ENCODE measurements at regions of chr5 and their contacts with region 1.

Region 1: GRCh38 chr5:156762771-156763170 is 87.3 kb upstream of the PPP1R2B start:
- DNase-seq: no peak
- H3K4me3 ChIP-seq: no peak overlapping the region
- H3K27ac ChIP-seq: no peak overlapping the region
- H3K27me3 ChIP-seq: no peaks in the 10 kb centered on the region
- CTCF ChIP-seq: no peak

Region 2: GRCh38 chr5:156350256-156350655 is 412.5 kb before region 1 on chr5:
- CTCF ChIA-PET with region 1: interaction called, 12 read pairs
- POLR2A ChIA-PET with region 1: no interaction called
- DNase-seq: no peak
- H3K4me3 ChIP-seq: no peak overlapping the region
- H3K27ac ChIP-seq: no peak overlapping the region
- H3K27me3 ChIP-seq: no peaks in the 10 kb centered on the region
- CTCF ChIP-seq: no peak

Region 3: GRCh38 chr5:156411185-156411613 is 351.6 kb before region 1 on chr5:
- CTCF ChIA-PET with region 1: no interaction called
- POLR2A ChIA-PET with region 1: no interaction called
- DNase-seq: peak; percentile 21
- H3K4me3 ChIP-seq: no peak overlapping the region
- H3K27ac ChIP-seq: no peak overlapping the region
- H3K27me3 ChIP-seq: no peaks in the 10 kb centered on the region
- CTCF ChIP-seq: no peak

Region 4: DNA sequence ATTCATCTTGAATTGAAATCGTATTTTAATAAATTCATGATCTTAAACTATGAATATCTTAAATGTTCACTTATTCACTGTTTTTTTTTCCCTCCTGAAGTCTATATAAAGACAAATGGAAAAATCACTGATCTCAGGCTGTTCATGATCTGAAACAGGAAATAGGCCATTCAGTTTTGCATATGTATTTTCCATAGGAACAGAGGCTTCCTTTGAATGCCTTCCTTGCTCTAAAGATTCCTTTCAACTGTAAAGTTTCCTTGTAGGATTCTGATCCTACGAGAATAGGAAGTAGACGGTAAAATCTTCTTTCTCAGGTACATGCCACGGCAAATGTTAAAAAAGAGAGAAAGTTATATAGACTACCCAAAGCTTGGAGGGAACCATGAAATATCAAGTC is 107.0 kb before region 1 on chr5:
- CTCF ChIA-PET with region 1: no interaction called
- POLR2A ChIA-PET with region 1: no interaction called
- DNase-seq: no peak
- H3K4me3 ChIP-seq: no peak overlapping the region
- H3K27ac ChIP-seq: no peak overlapping the region
- H3K27me3 ChIP-seq: no peaks in the 10 kb centered on the region
- CTCF ChIP-seq: no peak